ENCODE measurements at regions of chr17 and their contacts with region 1.

Region 1: GRCh38 chr17:50139950-50140871 is 10.3 kb upstream of the SAMD14 start:
- DNase-seq: no peak
- ATAC-seq: peak; percentile 94
- H3K4me3 ChIP-seq: no peak overlapping the region
- H3K27ac ChIP-seq: no peak overlapping the region
- H3K4me1 ChIP-seq: peaks cover 38% of the 10 kb centered on the region
- H3K27me3 ChIP-seq: no peaks in the 10 kb centered on the region
- CTCF ChIP-seq: peak; percentile 93 to 96 (median 94)
- EP300 ChIP-seq: no peak
- POLR2A ChIP-seq: peak; percentile 20
- RAD21 ChIP-seq: peak; percentile 53

Region 2: DNA sequence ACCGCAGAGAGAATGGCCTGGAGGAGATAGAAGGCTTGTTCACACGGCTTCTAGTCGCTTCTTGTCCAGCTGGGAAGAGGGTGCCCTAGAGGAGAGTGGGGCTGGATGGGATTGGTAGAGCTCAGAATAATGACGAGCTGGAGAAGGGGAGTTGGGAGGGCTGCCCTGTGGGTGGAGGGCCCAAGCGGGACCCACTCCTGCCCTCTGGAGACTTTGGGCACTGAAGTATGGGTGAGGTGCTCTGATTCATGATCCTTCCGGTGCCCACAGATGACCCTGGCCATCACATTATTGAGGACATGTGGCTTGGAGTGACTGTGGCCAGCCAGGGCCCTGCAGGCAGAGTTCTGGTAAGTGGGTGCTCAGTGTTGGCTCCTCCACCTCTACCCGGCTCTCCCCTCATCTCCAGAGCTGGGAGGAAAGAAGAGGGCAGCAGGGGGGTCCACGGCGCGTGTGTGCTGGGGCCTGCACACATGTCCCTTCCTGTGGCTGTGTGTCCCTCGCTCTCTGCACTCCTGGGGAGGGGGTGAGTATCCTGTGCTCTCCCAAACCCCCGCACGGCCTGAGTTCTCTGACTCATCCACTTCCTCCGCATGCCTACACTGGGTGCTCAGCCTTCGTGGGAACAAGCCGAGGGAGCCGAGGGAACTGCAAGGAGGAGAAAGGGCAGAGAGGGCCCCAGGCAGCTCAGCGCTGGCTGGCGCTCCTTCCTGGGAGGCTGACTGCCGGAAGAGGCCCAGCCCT is 75.8 kb before region 1 on chr17:
- CTCF ChIA-PET with region 1: no interaction called
- POLR2A ChIA-PET with region 1: no interaction called
- RAD21 ChIA-PET with region 1: no interaction called
- SMC1A ChIA-PET with region 1: no interaction called
- in situ Hi-C with region 1: no loop called
- intact Hi-C with region 1: no loop called
- DNase-seq: no peak
- ATAC-seq: no peak
- H3K4me3 ChIP-seq: no peak overlapping the region
- H3K27ac ChIP-seq: no peak overlapping the region
- H3K4me1 ChIP-seq: peaks cover 5% of the 10 kb centered on the region; the same call in 1 of the 2 replicates
- H3K27me3 ChIP-seq: no peaks in the 10 kb centered on the region
- CTCF ChIP-seq: no peak
- EP300 ChIP-seq: no peak
- POLR2A ChIP-seq: no peak
- RAD21 ChIP-seq: no peak

Region 3: DNA sequence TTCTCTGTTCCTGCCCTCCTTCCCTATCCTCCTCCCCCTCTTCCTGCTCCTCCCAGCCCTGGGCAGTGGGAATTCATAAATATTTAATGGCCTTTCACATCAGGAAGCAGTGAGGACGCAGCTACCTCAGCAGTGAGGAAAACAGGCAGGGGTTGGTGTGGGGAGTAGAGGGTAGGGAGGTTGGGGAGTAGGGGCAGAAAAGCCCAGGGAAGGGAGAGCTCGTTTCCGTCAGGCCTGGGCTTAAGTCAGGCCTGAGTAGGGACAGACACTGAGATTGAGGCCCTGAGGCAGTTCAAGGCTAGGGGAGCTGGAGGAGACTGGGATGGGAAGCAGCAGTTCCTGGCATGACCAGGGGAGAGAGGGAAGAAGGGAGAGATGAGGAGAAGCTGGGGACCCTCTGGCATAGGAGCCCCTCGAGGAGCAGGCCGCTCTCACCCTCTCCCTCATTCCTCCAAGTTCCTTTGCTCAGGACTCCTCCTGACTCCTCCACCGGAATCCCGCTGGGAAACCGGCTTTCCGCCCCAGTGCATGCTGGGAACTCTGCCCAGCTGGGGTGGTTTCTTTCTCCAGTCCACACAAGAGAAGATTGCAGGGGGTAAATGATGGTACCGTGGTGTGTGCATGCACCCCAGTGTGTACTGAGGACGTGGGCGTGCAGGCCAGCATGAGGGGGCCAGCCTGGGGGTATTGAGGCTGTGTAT is 16.4 kb before region 1 on chr17:
- CTCF ChIA-PET with region 1: interaction called, 13 read pairs
- POLR2A ChIA-PET with region 1: no interaction called
- RAD21 ChIA-PET with region 1: no interaction called
- SMC1A ChIA-PET with region 1: interaction called, 6 read pairs
- in situ Hi-C with region 1: no loop called
- intact Hi-C with region 1: no loop called
- DNase-seq: no peak
- ATAC-seq: no peak
- H3K4me3 ChIP-seq: no peak overlapping the region
- H3K27ac ChIP-seq: no peak overlapping the region
- H3K4me1 ChIP-seq: peaks cover 4% of the 10 kb centered on the region; the same call in 1 of the 2 replicates
- H3K27me3 ChIP-seq: peaks cover 6 to 9% of the 10 kb centered on the region in 2 experiments
- CTCF ChIP-seq: no peak
- EP300 ChIP-seq: no peak
- POLR2A ChIP-seq: no peak
- RAD21 ChIP-seq: no peak

Region 4: DNA sequence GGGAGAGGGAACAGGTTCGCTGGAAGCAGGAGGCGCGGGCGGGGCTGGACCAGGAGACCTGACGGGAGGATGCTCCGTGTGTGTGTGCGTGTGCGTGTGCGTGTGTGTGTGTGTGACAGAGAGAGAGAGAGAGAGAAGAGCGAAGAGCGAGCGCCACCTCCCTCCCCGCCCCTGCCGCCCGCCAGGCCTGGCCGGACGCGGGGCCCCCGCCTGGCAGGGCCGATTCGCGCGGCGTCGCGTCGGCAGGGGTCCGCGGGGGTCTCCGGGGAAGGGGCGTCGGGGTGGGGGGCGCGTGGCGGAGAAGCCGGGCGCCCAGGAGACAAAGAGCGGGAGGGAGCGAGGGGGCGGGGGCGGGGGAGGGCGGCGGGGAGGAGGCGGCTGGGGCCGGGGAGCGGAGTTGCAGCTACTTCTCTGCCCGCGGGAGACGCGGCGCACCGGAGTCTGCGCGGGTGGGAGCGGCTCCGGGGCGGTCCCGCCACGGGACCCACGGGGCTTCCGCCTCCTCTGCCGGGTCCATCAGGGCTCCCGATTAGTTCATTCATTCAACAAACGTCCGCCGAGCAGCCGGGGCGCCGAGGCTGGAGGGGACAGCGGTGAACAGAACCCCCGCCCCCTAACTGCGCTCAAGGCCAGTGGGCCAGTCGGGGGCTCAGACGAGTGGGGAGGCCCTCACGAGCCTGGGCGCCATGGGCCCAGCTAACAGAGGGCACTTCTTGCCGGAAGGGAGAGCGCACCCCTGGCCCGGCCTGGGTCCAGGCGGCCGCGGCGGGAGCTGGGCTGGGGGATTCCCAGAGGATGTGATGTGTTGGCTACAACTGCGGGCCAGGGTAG is 10.3 kb before region 1 on chr17 and contains the start of gene SAMD14:
- CTCF ChIA-PET with region 1: interaction called, 11 read pairs
- POLR2A ChIA-PET with region 1: no interaction called
- RAD21 ChIA-PET with region 1: no interaction called
- SMC1A ChIA-PET with region 1: interaction called, 4 read pairs
- in situ Hi-C with region 1: no loop called
- intact Hi-C with region 1: no loop called
- DNase-seq: no peak
- ATAC-seq: peak; percentile 82
- H3K4me3 ChIP-seq: peak within 1 kb of the TSS; percentile 62; the same call in 1 of the 2 replicates
- H3K27ac ChIP-seq: no peak within 1 kb of the TSS
- H3K4me1 ChIP-seq: peaks cover 6% of the 10 kb centered on the region; the same call in 1 of the 2 replicates
- H3K27me3 ChIP-seq: peaks cover 4 to 10% of the 10 kb centered on the region in 2 experiments
- CTCF ChIP-seq: no peak
- EP300 ChIP-seq: no peak
- POLR2A ChIP-seq: no peak
- RAD21 ChIP-seq: no peak
- polyA plus RNA-seq, gene SAMD14: not detected

Region 5: GRCh38 chr17:50151041-50151936 is 11.1 kb after region 1 on chr17:
- CTCF ChIA-PET with region 1: interaction called, 27 read pairs
- POLR2A ChIA-PET with region 1: interaction called, 6 read pairs
- RAD21 ChIA-PET with region 1: interaction called, 7 read pairs
- SMC1A ChIA-PET with region 1: interaction called, 8 read pairs
- in situ Hi-C with region 1: no loop called
- intact Hi-C with region 1: no loop called
- DNase-seq: peak; percentile 63
- ATAC-seq: peak; percentile 67
- H3K4me3 ChIP-seq: peak overlapping the region; percentile 95
- H3K27ac ChIP-seq: peak overlapping the region; percentile 89
- H3K4me1 ChIP-seq: peaks cover 46% of the 10 kb centered on the region
- H3K27me3 ChIP-seq: no peaks in the 10 kb centered on the region
- CTCF ChIP-seq: peak; percentile 49 to 84 (median 66)
- EP300 ChIP-seq: no peak; a peak in 1 of 4 replicates
- POLR2A ChIP-seq: peak; percentile 70
- RAD21 ChIP-seq: no peak

Region 6: DNA sequence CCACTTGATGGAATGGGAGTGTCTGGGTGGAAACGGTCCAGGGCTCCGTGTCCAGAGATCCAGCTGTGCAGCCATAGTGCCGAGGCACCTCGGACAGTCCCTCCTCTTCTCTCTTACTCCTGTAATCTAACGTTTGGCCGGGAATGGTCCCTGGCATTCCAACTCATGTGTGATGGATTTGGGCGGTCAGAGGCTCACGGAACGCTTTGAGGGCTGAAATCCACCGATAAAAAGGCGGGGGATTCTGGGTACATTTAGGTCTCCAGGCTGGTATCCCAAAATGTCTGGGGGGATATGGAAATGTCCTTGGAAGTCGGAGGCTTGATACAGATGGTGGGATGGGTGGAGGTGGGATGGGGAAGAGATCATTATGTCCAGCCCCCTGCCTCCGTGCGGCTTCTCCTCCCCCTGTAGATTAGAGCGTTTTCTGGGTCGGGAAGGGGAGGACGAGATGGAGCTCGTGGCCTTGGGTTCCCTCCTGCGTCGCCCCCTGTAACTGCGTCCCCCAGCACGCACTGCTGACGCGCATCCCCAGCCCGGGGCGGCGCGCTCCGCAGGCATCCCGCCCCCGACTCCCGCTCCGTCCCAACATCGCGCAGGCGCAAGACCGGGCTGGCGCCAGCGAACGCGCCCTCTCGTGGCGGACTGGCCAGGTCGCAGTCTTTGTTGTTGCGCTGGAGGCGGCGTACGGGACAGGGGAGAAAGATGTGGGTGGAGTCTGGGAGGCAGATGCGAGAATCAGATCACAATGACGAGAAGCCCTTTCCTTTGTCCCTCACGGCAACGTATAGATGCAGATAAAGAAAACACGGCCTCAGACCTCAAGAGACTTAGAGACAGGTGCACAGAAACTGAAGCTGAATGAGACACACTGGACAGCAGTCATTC is 21.1 kb after region 1 on chr17:
- CTCF ChIA-PET with region 1: interaction called, 99 read pairs
- POLR2A ChIA-PET with region 1: interaction called, 5 read pairs
- RAD21 ChIA-PET with region 1: interaction called, 7 read pairs
- SMC1A ChIA-PET with region 1: interaction called, 29 read pairs
- in situ Hi-C with region 1: no loop called
- intact Hi-C with region 1: loop called (anchors 1 kb)
- DNase-seq: peak; percentile 80
- ATAC-seq: peak; percentile 96
- H3K4me3 ChIP-seq: peak overlapping the region; percentile 53
- H3K27ac ChIP-seq: peak overlapping the region; percentile 32; the same call in 1 of the 2 replicates
- H3K4me1 ChIP-seq: peaks cover 26% of the 10 kb centered on the region
- H3K27me3 ChIP-seq: no peaks in the 10 kb centered on the region
- CTCF ChIP-seq: peak; percentile 93 to 98 (median 97)
- EP300 ChIP-seq: no peak
- POLR2A ChIP-seq: peak; percentile 83
- RAD21 ChIP-seq: peak; percentile 71

Region 7: DNA sequence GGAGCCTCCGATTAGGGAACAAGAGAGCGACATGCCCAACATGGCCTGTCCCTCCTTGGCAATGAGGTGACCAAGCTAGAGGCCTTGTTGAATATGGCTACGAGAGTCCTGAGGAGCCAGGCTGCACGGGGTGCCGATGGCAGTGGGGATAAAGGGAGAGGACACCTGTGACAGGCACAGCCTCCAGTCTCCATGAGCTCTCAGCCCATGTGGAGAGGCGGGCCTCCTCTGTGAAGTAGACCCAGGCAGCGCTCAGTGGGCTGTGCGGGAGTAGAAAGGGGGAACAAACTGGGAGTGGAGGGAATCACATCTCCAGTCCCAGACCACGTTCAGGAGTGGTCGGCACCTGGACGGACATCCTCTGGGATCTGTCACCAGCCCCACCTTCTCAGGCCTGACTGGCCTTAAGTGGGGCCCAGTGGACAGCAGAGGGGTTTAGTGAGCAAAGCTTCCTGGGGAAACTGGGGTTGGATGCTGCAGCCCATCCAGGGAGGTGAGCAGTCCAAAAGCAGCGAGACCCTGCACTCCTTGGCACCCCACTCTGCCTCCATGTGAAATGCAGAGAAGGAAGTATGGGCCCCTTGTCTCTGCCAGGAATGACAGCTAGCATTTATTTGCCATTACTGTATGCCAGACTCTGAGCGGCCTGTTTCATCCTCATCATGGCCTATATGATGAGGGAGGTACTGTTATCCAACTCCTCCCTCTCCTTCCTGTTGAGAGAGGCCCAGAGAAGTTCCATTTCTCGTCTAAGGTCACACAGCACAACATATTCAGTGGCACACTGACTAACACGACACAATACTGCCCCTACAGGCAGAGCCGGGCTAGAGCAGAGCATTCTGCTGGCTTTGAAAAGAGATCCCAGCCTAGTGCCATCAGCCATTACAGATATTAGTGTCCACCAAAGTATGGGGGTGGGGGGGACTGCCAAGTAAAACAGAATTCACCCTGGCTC is 129.5 kb after region 1 on chr17:
- CTCF ChIA-PET with region 1: no interaction called
- POLR2A ChIA-PET with region 1: no interaction called
- RAD21 ChIA-PET with region 1: no interaction called
- SMC1A ChIA-PET with region 1: no interaction called
- in situ Hi-C with region 1: no loop called
- intact Hi-C with region 1: no loop called
- DNase-seq: peak; percentile 19
- ATAC-seq: peak; percentile 86
- H3K4me3 ChIP-seq: no peak overlapping the region
- H3K27ac ChIP-seq: no peak overlapping the region
- H3K4me1 ChIP-seq: no peaks in the 10 kb centered on the region; the same call in 1 of the 2 replicates
- H3K27me3 ChIP-seq: no peaks in the 10 kb centered on the region
- CTCF ChIP-seq: peak; percentile 77 to 87 (median 85)
- EP300 ChIP-seq: no peak
- POLR2A ChIP-seq: no peak
- RAD21 ChIP-seq: peak; percentile 65

Measured in GM12878 (cell line).